ENCODE measurements at regions of chr2 and their contacts with region 1.

Region 1: GRCh38 chr2:218257390-218257981 is 3.3 kb upstream of the GPBAR1 start:
- DNase-seq: peak; percentile 82 to 94 (median 92)
- H3K4me3 ChIP-seq: peak overlapping the region in 1 of 3 experiments; percentile 53
- H3K4me3 Mint-ChIP-seq: peak overlapping the region; percentile 32 to 76
- H3K27ac ChIP-seq: peak overlapping the region; percentile 64 to 93
- H3K27ac Mint-ChIP-seq: peak overlapping the region; percentile 84 to 97 (median 92)
- H3K4me1 ChIP-seq: peaks cover 72 to 85% of the 10 kb centered on the region in 2 donors
- H3K4me1 Mint-ChIP-seq: peaks cover 88% of the 10 kb centered on the region
- H3K27me3 ChIP-seq: no peaks in the 10 kb centered on the region
- H3K27me3 Mint-ChIP-seq: no peaks in the 10 kb centered on the region
- CTCF ChIP-seq: peak; percentile 22

Region 2: GRCh38 chr2:218216674-218217359 is 40.7 kb before region 1 on chr2 and contains the start of gene ARPC2:
- intact Hi-C with region 1: loop called (anchors 5 kb)
- DNase-seq: peak; percentile 94
- H3K4me3 ChIP-seq: peak within 1 kb of the TSS; percentile 78 to 99 (median 99)
- H3K4me3 Mint-ChIP-seq: peak within 1 kb of the TSS; percentile 91 to 95
- H3K27ac ChIP-seq: peak within 1 kb of the TSS; percentile 88 to 97
- H3K27ac Mint-ChIP-seq: peak within 1 kb of the TSS; percentile 96 to 100 (median 99)
- H3K4me1 ChIP-seq: peaks cover 50 to 60% of the 10 kb centered on the region in 2 donors
- H3K4me1 Mint-ChIP-seq: peaks cover 50% of the 10 kb centered on the region
- H3K27me3 ChIP-seq: no peaks in the 10 kb centered on the region
- H3K27me3 Mint-ChIP-seq: no peaks in the 10 kb centered on the region
- CTCF ChIP-seq: no peak
- polyA plus RNA-seq, gene ARPC2: 640 to 1,227 (median 1,162) TPM

Region 3: GRCh38 chr2:218223046-218223445 is 34.4 kb before region 1 on chr2:
- intact Hi-C with region 1: loop called (anchors 5 kb)
- DNase-seq: peak; percentile 21 to 51 (median 40)
- H3K4me3 ChIP-seq: peak overlapping the region in 1 of 3 experiments; percentile 30
- H3K4me3 Mint-ChIP-seq: no peak overlapping the region
- H3K27ac ChIP-seq: peak overlapping the region in 1 of 2 donors; percentile 73
- H3K27ac Mint-ChIP-seq: peak overlapping the region; percentile 6 to 80 (median 67)
- H3K4me1 ChIP-seq: peaks cover 82 to 98% of the 10 kb centered on the region in 2 donors
- H3K4me1 Mint-ChIP-seq: peaks cover 87% of the 10 kb centered on the region
- H3K27me3 ChIP-seq: no peaks in the 10 kb centered on the region
- H3K27me3 Mint-ChIP-seq: no peaks in the 10 kb centered on the region
- CTCF ChIP-seq: no peak

Region 4: DNA sequence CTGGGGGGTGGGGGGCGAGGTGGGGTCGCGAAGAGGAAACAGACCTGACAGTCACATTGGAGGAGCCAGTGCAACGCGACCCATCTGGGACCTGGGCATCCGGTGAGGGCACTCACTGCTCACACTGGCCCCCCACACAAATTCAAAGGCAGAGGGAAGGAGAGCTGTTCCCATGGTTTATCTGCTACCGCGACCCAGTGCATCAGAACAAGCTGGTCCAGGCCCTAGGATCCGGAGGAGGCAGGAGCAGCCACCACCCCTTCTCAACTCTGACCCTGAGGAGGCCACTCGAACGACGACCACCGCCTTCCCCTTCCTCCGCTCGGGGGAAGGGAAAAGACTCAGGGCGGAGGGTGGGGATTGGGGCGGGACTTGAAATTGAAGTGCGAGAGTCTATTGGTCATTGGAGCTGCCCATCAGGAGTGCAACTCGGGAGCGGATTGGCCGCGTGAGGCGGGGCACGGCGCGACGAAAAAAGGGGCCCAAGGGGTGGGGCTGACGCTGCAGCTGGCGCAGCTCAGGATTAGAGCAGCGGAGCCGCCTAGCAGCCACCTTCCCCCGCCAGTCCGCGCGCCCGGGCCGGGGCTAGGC is 701.8 kb after region 1 on chr2 and contains the start of gene CDK5R2:
- intact Hi-C with region 1: no loop called
- DNase-seq: peak; percentile 1 to 31 (median 10)
- H3K4me3 ChIP-seq: no peak within 1 kb of the TSS
- H3K4me3 Mint-ChIP-seq: peak within 1 kb of the TSS; percentile 58 to 79
- H3K27ac ChIP-seq: no peak within 1 kb of the TSS
- H3K27ac Mint-ChIP-seq: no peak within 1 kb of the TSS
- H3K4me1 ChIP-seq: peaks cover 0 to 10% of the 10 kb centered on the region in 2 donors
- H3K4me1 Mint-ChIP-seq: peaks cover 11% of the 10 kb centered on the region
- H3K27me3 ChIP-seq: peaks cover 70 to 93% of the 10 kb centered on the region in 2 donors
- H3K27me3 Mint-ChIP-seq: peaks cover 81 to 94% (median 85%) of the 10 kb centered on the region in 3 donors
- CTCF ChIP-seq: no peak
- polyA plus RNA-seq, gene CDK5R2: not detected

Measured in CD14-positive monocyte (primary cell).